T-cell (primary cell): ENCODE measurements at regions of chr6 and their contacts with region 1.

Region 1: GRCh38 chr6:20509212-20509611 is 25.0 kb upstream of the CDKAL1 start:
- DNase-seq: no peak
- ATAC-seq: no peak
- H3K4me3 ChIP-seq: no peak overlapping the region
- H3K4me3 Mint-ChIP-seq: no peak overlapping the region
- H3K27ac ChIP-seq: no peak overlapping the region
- H3K27ac Mint-ChIP-seq: no peak overlapping the region
- H3K4me1 ChIP-seq: no peaks in the 10 kb centered on the region
- H3K4me1 Mint-ChIP-seq: no peaks in the 10 kb centered on the region
- H3K27me3 ChIP-seq: peaks cover 0 to 6% of the 10 kb centered on the region in 2 experiments
- H3K27me3 Mint-ChIP-seq: peaks cover 0 to 3% of the 10 kb centered on the region in 2 donors

Region 2: DNA sequence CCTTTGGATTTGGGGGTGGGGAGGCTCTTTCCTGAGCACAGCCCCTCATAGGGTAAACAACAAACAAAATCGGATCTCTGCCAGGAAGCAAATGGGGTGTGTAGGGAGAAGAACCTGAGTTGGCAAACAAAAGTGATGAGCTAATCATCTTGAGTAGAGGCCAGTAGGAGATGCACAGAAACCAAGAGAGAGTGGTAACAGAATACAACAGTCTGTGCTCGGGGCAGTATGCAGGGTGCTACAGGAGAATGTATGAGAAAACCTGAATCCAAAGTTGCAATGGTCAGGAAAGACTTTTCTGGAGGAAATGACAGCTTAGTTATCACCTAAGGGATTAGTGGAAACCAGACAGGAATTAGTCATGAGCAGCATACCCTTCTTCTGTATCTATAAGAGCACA is 202.8 kb after region 1 on chr6:
- CTCF ChIA-PET with region 1: interaction called in 1 of 2 experiments, 11 read pairs
- POLR2A ChIA-PET with region 1: no interaction called
- DNase-seq: no peak
- ATAC-seq: no peak
- H3K4me3 ChIP-seq: no peak overlapping the region
- H3K4me3 Mint-ChIP-seq: no peak overlapping the region
- H3K27ac ChIP-seq: no peak overlapping the region
- H3K27ac Mint-ChIP-seq: no peak overlapping the region
- H3K4me1 ChIP-seq: peaks cover 0 to 2% of the 10 kb centered on the region in 2 experiments
- H3K4me1 Mint-ChIP-seq: peaks cover 25 to 41% (median 32%) of the 10 kb centered on the region in 3 donors
- H3K27me3 ChIP-seq: no peaks in the 10 kb centered on the region
- H3K27me3 Mint-ChIP-seq: no peaks in the 10 kb centered on the region

Region 3: GRCh38 chr6:20744911-20745557 is 235.8 kb after region 1 on chr6:
- CTCF ChIA-PET with region 1: no interaction called
- POLR2A ChIA-PET with region 1: no interaction called
- DNase-seq: no peak
- ATAC-seq: no peak
- H3K4me3 ChIP-seq: no peak overlapping the region
- H3K4me3 Mint-ChIP-seq: no peak overlapping the region
- H3K27ac ChIP-seq: no peak overlapping the region
- H3K27ac Mint-ChIP-seq: no peak overlapping the region
- H3K4me1 ChIP-seq: no peaks in the 10 kb centered on the region
- H3K4me1 Mint-ChIP-seq: peaks cover 5 to 25% (median 17%) of the 10 kb centered on the region in 3 donors
- H3K27me3 ChIP-seq: no peaks in the 10 kb centered on the region
- H3K27me3 Mint-ChIP-seq: no peaks in the 10 kb centered on the region